ENCODE measurements at regions of chr19 and their contacts with region 1.

Region 1: DNA sequence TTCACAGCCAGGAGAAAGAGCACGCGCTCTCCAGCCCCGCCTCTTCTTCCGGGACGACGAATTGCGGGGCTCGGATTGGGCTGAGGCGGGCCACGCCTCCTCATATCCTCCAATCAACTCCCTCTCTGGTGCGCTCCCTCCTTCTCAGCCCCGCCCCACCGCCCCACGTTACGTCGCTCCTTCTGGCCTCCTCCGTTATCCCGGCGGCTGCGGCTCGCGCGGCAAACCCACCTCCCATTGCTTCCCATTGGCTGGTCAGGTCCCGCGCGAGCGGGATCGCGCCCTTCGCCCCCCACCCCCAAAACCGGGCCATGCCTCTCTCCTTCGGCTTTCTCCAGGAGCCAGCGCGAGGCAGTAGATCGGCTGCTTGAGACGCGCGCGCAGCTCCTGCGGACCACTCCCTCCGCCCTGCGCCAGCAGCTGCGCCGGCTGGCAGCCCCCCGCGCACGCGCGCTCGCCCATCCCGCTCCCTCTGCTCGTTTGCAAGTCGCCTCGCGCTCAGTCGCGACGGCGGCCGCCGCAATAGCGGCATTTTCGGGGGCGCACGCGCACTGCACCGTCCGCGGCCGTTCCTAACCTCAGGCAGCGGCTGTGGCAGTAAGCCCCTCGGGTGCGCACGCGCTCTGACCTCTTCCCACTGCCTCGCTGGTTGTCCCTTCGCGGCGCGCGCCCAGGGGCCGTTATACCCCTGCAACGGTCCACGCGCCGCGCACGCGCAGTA is 512 bp upstream of the ARHGAP35 start:
- DNase-seq: peak; percentile 99
- H3K4me3 ChIP-seq: peak overlapping the region; percentile 16 to 81 (median 52)
- H3K27ac ChIP-seq: peak overlapping the region; percentile 76
- H3K4me1 ChIP-seq: peaks cover 33% of the 10 kb centered on the region
- H3K27me3 ChIP-seq: no peaks in the 10 kb centered on the region
- CTCF ChIP-seq: no peak
- POLR2A ChIP-seq: peak; percentile 38

Region 2: GRCh38 chr19:46904114-46905060 is 44.1 kb after region 1 on chr19:
- CTCF ChIA-PET with region 1: interaction called, 10 read pairs
- POLR2A ChIA-PET with region 1: interaction called, 4 read pairs
- dilution Hi-C with region 1: no loop called
- intact Hi-C with region 1: loop called (anchors 2 kb)
- DNase-seq: peak; percentile 49
- H3K4me3 ChIP-seq: no peak overlapping the region
- H3K27ac ChIP-seq: peak overlapping the region; percentile 27
- H3K4me1 ChIP-seq: peaks cover 30% of the 10 kb centered on the region
- H3K27me3 ChIP-seq: no peaks in the 10 kb centered on the region
- CTCF ChIP-seq: no peak
- POLR2A ChIP-seq: no peak

Region 3: GRCh38 chr19:46944918-46945628 is 84.8 kb after region 1 on chr19:
- CTCF ChIA-PET with region 1: interaction called, 12 read pairs
- POLR2A ChIA-PET with region 1: no interaction called
- dilution Hi-C with region 1: no loop called
- intact Hi-C with region 1: no loop called
- DNase-seq: peak; percentile 54
- H3K4me3 ChIP-seq: no peak overlapping the region
- H3K27ac ChIP-seq: no peak overlapping the region
- H3K4me1 ChIP-seq: peaks cover 2% of the 10 kb centered on the region
- H3K27me3 ChIP-seq: no peaks in the 10 kb centered on the region
- CTCF ChIP-seq: no peak
- POLR2A ChIP-seq: no peak

Region 4: GRCh38 chr19:47013041-47013517 is 152.8 kb after region 1 on chr19:
- CTCF ChIA-PET with region 1: interaction called, 15 read pairs
- POLR2A ChIA-PET with region 1: no interaction called
- dilution Hi-C with region 1: no loop called
- intact Hi-C with region 1: no loop called
- DNase-seq: peak; percentile 66
- H3K4me3 ChIP-seq: no peak overlapping the region
- H3K27ac ChIP-seq: no peak overlapping the region
- H3K4me1 ChIP-seq: no peaks in the 10 kb centered on the region
- H3K27me3 ChIP-seq: no peaks in the 10 kb centered on the region
- CTCF ChIP-seq: peak; percentile 98 to 99
- POLR2A ChIP-seq: no peak

Region 5: DNA sequence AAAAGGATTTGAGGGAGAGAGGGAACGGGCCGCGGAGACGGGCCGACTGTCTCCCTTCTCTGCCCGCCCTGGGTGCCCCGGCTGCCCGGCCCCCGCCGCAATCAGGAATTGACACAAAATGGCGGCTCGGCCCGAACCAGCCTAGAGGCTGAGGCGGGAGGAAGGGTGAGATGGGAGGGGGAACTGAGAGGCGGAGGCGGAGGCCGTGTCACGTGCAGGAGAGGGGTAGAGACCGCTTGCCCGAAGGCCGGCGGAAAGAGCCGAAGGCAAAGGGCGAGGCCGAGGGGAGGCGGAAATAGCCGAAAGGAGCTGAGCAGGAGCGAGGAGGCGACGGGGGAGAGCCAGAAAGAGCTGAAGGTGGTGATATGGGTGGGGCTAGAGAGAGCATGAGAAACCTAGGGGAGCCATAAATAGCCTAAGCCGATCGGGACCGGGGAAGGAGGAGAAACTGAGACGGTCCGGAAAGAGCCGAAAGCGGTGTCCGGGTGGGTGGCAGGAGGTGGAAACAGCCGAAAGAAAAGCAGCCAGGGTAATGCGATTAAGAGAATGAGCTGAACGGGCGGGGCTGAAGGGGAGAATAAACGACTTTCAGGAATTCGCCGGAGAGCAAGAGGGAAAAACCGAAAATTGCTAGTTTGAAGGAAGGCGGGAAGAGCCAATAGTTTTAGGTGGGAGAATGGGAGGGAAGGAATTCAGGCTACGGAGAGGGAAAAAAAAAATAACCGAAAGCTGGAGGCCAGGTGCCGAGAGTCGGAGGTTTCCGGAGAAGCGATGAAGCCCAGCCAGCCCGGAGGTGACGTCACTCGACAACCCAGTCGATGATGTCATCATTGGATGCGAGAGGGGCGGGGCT is 252.9 kb after region 1 on chr19 and contains the start of gene ZC3H4:
- CTCF ChIA-PET with region 1: interaction called, 5 read pairs
- POLR2A ChIA-PET with region 1: no interaction called
- dilution Hi-C with region 1: no loop called
- intact Hi-C with region 1: loop called (anchors 5 kb)
- DNase-seq: peak; percentile 100
- H3K4me3 ChIP-seq: peak within 1 kb of the TSS; percentile 79 to 94 (median 80)
- H3K27ac ChIP-seq: peak within 1 kb of the TSS; percentile 92
- H3K4me1 ChIP-seq: peaks cover 23% of the 10 kb centered on the region
- H3K27me3 ChIP-seq: no peaks in the 10 kb centered on the region
- CTCF ChIP-seq: no peak
- POLR2A ChIP-seq: peak; percentile 89
- total RNA-seq, gene ZC3H4: 56.4 and 63.9 TPM in 2 replicates

Measured in endothelial cell of umbilical vein (primary cell).